ENCODE measurements at regions of chr15 and their contacts with region 1.

Region 1: DNA sequence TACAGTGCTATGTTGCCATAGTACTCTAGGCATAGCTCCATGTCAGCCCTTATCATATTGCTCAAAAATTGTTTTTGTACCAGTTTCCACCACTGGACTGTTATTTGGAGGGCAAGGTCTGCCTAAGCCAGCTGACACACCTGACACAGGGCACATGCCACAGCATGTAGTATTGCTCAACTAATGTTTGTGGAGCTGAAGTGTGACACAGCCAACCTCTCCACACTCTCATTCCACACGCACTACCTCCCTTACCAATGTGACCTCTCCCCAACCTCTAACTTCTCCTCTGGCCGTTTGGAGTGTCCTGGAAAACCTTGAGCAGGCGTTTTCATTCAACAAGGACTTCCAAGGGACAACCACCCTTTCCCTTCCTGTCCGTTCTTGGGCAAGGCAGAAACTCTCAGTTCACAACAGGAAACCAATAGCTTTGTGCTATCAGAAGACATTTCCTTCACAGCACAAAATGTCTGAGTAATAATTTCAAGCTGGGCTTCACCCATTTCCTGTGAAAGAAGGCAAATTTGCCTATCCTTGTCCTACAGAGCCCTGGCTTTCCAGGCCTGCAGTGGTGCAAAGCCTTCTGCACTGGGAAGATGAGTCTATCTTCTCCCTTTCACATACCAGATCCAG is 38.4 kb downstream of the TLNRD1 start:
- DNase-seq: peak; percentile 87
- H3K4me3 ChIP-seq: no peak overlapping the region
- H3K27ac ChIP-seq: peak overlapping the region; percentile 76
- H3K4me1 ChIP-seq: peaks cover 22% of the 10 kb centered on the region
- H3K27me3 ChIP-seq: no peaks in the 10 kb centered on the region
- CTCF ChIP-seq: no peak
- POLR2A ChIP-seq: peak; percentile 31

Region 2: GRCh38 chr15:81011593-81011992 is 27.5 kb before region 1 on chr15:
- CTCF ChIA-PET with region 1: no interaction called
- POLR2A ChIA-PET with region 1: no interaction called
- dilution Hi-C with region 1: no loop called
- intact Hi-C with region 1: no loop called
- DNase-seq: no peak
- H3K4me3 ChIP-seq: no peak overlapping the region
- H3K27ac ChIP-seq: no peak overlapping the region
- H3K4me1 ChIP-seq: peaks cover 4% of the 10 kb centered on the region
- H3K27me3 ChIP-seq: no peaks in the 10 kb centered on the region
- CTCF ChIP-seq: no peak
- POLR2A ChIP-seq: no peak

Region 3: DNA sequence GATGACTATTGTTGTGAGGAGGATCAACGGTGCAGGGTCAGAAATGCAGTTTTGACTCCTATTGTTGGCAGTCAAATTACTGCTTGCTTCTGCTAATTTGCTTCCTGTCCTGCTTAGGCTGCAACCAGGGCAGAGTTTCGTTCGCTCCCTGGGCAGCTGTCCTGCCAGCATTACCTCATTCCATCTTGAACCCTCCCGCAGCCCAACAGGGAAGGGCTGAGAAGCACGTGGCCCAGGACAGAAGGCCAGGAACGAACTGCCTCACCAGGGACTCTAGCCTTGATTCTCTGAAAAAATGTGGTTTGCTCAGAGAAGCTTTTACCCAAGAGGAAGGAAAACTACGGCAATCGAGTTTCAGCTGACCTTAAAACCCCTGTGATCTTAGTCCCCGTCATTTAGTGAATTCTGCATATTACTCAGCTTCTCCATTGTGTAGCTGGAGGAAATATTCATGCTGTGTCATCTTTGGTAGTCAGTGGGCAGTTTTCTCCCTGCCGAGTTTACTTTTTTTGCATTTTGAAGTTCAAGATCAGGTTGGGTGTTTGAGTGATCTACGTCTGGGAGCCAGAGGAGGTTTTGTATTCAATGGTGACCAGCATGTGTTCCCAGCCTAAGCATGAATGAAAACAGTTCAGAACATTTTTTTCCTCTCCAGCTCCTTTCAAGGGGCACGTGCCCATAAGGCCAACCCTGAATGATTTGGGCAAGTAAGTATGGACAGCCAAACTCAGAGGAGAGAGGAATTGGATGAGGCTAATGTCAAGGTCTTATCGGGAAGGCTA is 15.4 kb before region 1 on chr15:
- CTCF ChIA-PET with region 1: interaction called, 3 read pairs
- POLR2A ChIA-PET with region 1: no interaction called
- dilution Hi-C with region 1: no loop called
- intact Hi-C with region 1: loop called (anchors 1 kb)
- DNase-seq: peak; percentile 91
- H3K4me3 ChIP-seq: no peak overlapping the region
- H3K27ac ChIP-seq: peak overlapping the region; percentile 97
- H3K4me1 ChIP-seq: peaks cover 23% of the 10 kb centered on the region
- H3K27me3 ChIP-seq: no peaks in the 10 kb centered on the region
- CTCF ChIP-seq: no peak
- POLR2A ChIP-seq: no peak

Region 4: DNA sequence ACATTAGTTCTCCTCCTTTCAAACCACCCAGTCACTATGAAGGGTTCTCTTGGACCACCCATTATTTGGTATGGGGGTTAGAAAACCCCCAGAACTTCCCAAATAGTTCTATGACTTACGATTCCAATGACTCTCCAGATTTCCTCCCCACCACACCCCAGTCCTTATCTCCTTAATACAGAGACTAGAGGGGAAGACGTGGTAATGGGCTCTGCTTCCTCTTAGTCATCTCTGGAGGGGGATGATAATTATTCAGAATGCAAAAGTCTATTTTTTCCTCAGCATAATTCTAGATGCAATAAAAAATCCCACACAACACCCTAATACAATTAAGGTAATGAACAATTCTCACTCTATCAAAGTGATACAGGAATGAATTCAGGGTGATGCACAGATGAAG is 46.1 kb after region 1 on chr15:
- CTCF ChIA-PET with region 1: interaction called, 3 read pairs
- POLR2A ChIA-PET with region 1: no interaction called
- dilution Hi-C with region 1: no loop called
- intact Hi-C with region 1: loop called (anchors 1 kb)
- DNase-seq: peak; percentile 68
- H3K4me3 ChIP-seq: no peak overlapping the region
- H3K27ac ChIP-seq: no peak overlapping the region
- H3K4me1 ChIP-seq: peaks cover 13% of the 10 kb centered on the region
- H3K27me3 ChIP-seq: no peaks in the 10 kb centered on the region
- CTCF ChIP-seq: no peak
- POLR2A ChIP-seq: no peak

Region 5: DNA sequence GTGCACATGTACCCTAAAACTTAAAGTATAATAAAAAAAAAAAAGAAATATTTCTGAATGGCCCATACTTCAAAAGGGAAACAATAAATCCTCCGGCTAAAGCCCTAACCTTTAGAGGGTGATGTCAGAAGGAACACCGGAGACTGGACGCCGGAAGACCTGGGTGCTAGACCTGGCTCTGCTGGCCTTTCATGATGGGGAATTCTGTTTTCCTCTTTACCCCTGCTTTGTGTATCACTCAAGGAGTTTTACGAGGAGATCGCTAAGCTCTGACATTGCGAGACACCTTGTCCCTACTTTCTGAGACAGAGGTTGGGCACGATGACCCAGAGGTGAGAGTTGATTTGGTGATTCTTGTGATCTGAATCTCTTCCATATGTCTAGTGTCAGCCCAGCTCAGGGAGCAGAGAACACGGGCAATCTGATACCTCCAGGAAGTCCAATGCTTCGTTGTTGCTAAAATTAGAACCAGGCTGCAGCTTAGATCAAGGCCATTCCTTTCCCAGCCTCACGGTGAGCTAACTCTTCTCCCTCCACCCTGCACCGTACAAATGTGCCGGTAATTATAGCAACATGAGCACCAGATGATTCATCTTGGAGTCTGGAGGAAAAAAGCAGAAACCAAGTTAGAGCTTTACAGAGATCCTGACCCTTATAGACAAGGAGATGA is 52.9 kb after region 1 on chr15:
- CTCF ChIA-PET with region 1: no interaction called
- POLR2A ChIA-PET with region 1: no interaction called
- dilution Hi-C with region 1: no loop called
- intact Hi-C with region 1: loop called (anchors 1 kb)
- DNase-seq: peak; percentile 95
- H3K4me3 ChIP-seq: peak overlapping the region in 1 of 3 experiments; percentile 16
- H3K27ac ChIP-seq: peak overlapping the region; percentile 51
- H3K4me1 ChIP-seq: peaks cover 14% of the 10 kb centered on the region
- H3K27me3 ChIP-seq: no peaks in the 10 kb centered on the region
- CTCF ChIP-seq: no peak
- POLR2A ChIP-seq: no peak

Region 6: GRCh38 chr15:82540055-82540983 is 1501.2 kb after region 1 on chr15 and contains the start of gene RPS17:
- CTCF ChIA-PET with region 1: no interaction called
- POLR2A ChIA-PET with region 1: no interaction called
- dilution Hi-C with region 1: no loop called
- intact Hi-C with region 1: no loop called
- DNase-seq: peak; percentile 94
- H3K4me3 ChIP-seq: peak within 1 kb of the TSS; percentile 73 to 87 (median 86)
- H3K27ac ChIP-seq: peak within 1 kb of the TSS; percentile 56
- H3K4me1 ChIP-seq: peaks cover 17% of the 10 kb centered on the region
- H3K27me3 ChIP-seq: peaks cover 4 to 11% of the 10 kb centered on the region in 2 experiments
- CTCF ChIP-seq: peak; percentile 100
- POLR2A ChIP-seq: peak; percentile 99
- total RNA-seq, gene RPS17: 1,599 and 1,690 TPM in 2 replicates

Measured in endothelial cell of umbilical vein (primary cell).